SK-N-SH (cell line): ENCODE measurements at regions of chr22 and their contacts with region 1.

Region 1: DNA sequence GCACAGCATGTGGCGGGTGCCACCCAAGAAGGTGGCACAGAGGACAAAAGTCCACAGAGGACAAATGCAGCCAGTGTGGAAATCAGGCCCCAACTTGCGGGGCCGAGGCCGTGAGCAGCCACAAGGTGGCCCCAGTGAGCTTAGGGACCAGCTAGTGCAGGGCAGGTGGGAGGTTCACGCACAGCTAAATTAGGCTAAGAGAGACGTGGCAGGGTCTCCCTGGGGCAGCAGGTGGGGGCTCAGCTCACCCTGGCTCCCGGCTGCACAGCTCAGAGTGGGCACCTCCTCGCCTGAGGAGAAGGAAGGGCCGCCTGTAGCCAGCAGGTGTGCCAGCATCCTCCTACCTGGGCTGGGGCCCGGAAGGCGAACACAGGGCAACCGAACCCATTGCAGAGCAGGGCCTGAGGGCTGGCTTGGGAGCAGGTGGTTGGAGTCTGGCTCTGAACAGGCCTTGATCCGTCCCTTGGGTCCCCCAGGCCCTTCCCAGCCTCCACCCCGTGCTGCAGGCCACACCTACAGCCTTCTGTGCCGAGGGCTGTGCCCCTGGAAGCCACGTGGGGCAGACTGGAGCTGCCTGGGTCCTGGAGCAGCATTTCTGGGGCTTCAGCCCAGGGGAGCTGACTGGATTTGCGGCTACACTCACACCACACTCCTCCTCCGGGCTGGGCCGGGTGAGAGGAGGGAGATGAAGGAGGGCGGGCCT is 26.1 kb upstream of the CELSR1 start:
- DNase-seq: peak; percentile 85
- H3K4me3 ChIP-seq: no peak overlapping the region; a peak in 1 of 4 replicates
- H3K27ac ChIP-seq: 0 out of 4 replicates have a peak overlapping the region, but pooled peaks of 1 of the 2 experiments have one; percentile 8
- H3K4me1 ChIP-seq: peaks cover 0 to 12% of the 10 kb centered on the region in 2 experiments; a peak in 1 of 4 replicates
- H3K27me3 ChIP-seq: no peaks in the 10 kb centered on the region
- CTCF ChIP-seq: peak; percentile 70
- EP300 ChIP-seq: no peak
- RAD21 ChIP-seq: peak; percentile 84

Region 2: DNA sequence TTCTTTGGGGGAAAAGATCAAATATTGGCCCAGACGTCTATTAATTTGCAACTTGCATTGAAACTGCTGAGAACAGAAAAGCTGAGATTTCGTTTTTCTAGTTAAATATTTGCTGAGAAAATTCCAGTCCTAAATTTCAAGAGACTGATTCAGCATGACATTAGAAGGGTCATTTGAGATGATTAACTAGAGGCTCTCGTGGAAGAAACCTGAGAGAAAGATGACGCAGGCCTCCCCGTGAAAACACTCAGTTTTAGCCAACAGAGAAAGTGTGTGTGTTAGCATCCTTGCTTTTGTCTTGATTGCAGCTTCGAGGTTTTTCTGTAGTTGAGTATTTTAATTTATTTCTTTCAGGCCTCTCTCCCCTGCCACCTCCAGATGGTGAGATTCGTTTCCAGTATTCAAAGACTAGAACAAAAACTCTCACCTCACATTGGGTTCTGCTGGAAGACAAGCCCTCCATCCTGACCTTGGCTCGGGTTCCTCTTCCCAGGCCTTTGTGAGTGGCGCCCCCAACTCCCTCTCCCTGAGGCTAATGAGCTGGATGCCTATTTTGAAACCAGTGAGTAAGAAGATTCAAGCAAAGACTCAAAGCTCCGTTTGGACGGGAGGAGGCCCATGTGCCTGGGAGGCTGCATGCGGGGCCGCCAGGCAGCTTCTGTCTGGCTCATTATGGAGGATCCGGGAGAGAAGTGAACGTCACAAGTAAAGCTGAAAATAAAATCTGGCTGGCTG is 78.5 kb before region 1 on chr22:
- CTCF ChIA-PET with region 1: no interaction called
- POLR2A ChIA-PET with region 1: no interaction called
- DNase-seq: no peak
- H3K4me3 ChIP-seq: no peak overlapping the region
- H3K27ac ChIP-seq: no peak overlapping the region
- H3K4me1 ChIP-seq: no peaks in the 10 kb centered on the region
- H3K27me3 ChIP-seq: 0 out of 2 replicates have a peak, but pooled peaks cover 3% of the 10 kb centered on the region
- CTCF ChIP-seq: no peak
- EP300 ChIP-seq: no peak
- RAD21 ChIP-seq: no peak

Region 3: DNA sequence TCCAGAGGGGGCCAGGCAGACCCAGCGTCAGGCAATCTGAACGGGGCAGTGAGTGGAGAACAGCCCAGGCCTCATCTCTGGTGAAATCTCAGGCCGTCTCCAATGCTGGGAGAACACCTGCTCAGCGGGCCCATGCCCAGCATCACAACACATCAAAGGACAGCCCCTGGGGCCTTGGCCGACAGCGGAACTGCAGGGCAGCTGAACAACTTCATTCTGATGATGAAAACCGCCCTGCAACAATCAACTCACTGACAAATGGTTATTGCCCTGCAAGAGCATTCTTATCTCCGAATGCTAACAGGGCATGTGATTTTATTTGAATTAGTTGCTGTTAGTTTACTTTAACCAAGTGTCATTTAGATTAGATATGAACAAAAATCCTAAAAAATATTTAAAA is 40.7 kb before region 1 on chr22:
- CTCF ChIA-PET with region 1: no interaction called
- POLR2A ChIA-PET with region 1: no interaction called
- DNase-seq: no peak
- H3K4me3 ChIP-seq: no peak overlapping the region
- H3K27ac ChIP-seq: no peak overlapping the region
- H3K4me1 ChIP-seq: no peaks in the 10 kb centered on the region; a peak in 1 of 4 replicates
- H3K27me3 ChIP-seq: no peaks in the 10 kb centered on the region
- CTCF ChIP-seq: no peak
- EP300 ChIP-seq: no peak
- RAD21 ChIP-seq: no peak

Region 4: DNA sequence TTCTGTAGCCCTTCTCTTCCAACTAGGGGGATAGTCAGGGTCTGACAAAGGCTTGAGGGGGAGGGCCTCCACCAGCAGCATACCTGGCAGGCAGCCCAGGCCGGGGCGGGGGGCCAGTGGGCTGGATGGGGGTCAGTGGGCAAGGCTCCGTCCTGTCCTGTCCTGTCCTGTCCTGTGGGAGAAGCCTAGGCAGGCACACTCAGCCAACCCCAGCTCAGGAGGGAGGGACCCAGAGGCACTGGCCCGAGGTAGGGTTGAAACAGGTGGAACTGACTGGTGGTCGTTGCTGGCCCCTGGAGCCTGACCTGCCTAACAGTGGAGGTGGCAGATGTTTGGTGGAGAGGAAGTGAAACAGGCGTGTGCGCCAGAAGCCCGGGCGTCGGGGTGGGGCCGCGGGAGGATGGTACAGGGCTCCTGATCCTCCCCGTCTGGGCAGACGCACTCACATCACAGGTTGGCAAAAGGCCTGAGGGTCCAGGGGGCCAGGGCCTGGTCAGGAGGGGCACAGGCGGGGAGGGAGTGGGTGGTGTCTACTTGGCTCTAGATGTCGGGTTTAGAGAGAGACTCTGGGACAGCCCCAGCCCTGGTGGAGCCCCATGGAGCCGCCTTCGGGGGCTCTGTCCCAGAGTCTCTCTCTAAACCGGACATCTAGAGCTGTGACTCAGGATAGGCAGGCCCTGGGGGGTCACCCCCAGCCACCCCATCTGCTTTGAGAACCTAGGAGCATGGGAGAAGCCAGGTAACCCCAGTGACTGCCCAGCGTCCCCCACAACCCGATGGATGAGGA is 24.2 kb after region 1 on chr22:
- CTCF ChIA-PET with region 1: interaction called, 17 read pairs
- POLR2A ChIA-PET with region 1: no interaction called
- DNase-seq: peak; percentile 71
- H3K4me3 ChIP-seq: no peak overlapping the region
- H3K27ac ChIP-seq: no peak overlapping the region; a peak in 1 of 4 replicates
- H3K4me1 ChIP-seq: peaks cover 0 to 40% of the 10 kb centered on the region in 2 experiments; a peak in 1 of 4 replicates
- H3K27me3 ChIP-seq: no peaks in the 10 kb centered on the region
- CTCF ChIP-seq: no peak
- EP300 ChIP-seq: no peak
- RAD21 ChIP-seq: no peak

Region 5: DNA sequence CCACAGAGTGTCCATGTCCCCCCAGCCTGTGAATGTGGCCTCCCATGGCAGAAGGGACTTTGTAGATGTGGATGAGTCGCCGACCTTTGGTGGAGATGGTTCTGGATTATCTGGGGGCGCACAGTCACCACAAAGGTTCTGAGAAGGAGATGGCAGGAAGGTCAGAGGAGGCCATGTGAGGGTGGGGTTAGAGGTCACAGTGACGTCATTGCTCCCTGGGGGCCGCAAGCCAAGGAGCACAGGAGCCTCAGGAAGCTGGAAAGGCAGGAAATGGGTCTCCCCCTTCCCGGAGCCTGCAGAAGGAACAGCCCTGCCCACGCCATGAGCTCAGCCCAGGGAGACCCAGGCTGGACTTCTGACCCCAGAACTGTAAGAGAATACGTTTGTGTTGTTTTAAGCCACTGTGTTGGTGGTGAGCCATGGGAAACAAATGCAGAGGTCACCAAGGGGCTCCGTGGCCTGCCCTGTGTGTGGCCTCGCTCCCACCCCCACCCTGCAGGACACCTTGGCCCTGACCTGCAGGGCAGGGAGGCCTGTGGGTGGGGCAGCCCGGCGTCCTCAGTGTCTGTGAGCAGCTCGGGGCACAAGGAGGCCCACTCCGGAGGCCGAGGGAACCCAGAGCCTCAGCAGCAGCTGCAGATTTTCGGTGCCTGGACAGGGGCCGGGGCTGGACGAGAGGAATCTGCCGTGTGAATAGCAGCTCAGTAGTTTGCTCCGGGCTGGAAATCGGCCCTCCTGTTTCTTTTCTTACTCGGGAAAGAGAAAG is 88.7 kb after region 1 on chr22:
- CTCF ChIA-PET with region 1: interaction called, 20 read pairs
- POLR2A ChIA-PET with region 1: no interaction called
- DNase-seq: no peak
- H3K4me3 ChIP-seq: no peak overlapping the region
- H3K27ac ChIP-seq: no peak overlapping the region
- H3K4me1 ChIP-seq: peaks cover 0 to 27% of the 10 kb centered on the region in 2 experiments; a peak in 1 of 4 replicates
- H3K27me3 ChIP-seq: no peaks in the 10 kb centered on the region
- CTCF ChIP-seq: no peak
- EP300 ChIP-seq: no peak
- RAD21 ChIP-seq: no peak

Region 6: DNA sequence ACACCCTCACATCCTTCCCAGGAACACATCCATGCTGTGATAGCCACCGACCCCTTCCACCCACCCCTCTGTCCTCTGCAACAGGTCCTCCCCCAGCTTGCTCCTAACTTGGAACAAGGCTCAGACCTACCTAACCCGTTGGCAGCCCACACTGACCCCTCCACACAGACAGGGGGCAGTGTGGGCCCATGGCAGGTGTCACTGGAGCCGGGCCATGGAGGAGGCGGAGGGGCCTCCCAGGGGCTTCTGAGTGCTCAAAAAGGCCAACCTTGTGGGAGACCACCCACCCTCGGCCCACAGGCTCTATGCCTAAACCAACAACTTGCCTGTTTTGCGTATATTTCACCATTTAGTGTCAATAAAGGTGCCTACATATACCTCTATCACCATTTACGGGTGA is 117.5 kb after region 1 on chr22:
- CTCF ChIA-PET with region 1: interaction called, 17 read pairs
- POLR2A ChIA-PET with region 1: no interaction called
- DNase-seq: peak; percentile 78
- H3K4me3 ChIP-seq: no peak overlapping the region
- H3K27ac ChIP-seq: no peak overlapping the region
- H3K4me1 ChIP-seq: no peaks in the 10 kb centered on the region; a peak in 1 of 4 replicates
- H3K27me3 ChIP-seq: no peaks in the 10 kb centered on the region
- CTCF ChIP-seq: peak; percentile 53
- EP300 ChIP-seq: no peak
- RAD21 ChIP-seq: peak; percentile 27; the same call in 1 of the 2 replicates

Region 7: DNA sequence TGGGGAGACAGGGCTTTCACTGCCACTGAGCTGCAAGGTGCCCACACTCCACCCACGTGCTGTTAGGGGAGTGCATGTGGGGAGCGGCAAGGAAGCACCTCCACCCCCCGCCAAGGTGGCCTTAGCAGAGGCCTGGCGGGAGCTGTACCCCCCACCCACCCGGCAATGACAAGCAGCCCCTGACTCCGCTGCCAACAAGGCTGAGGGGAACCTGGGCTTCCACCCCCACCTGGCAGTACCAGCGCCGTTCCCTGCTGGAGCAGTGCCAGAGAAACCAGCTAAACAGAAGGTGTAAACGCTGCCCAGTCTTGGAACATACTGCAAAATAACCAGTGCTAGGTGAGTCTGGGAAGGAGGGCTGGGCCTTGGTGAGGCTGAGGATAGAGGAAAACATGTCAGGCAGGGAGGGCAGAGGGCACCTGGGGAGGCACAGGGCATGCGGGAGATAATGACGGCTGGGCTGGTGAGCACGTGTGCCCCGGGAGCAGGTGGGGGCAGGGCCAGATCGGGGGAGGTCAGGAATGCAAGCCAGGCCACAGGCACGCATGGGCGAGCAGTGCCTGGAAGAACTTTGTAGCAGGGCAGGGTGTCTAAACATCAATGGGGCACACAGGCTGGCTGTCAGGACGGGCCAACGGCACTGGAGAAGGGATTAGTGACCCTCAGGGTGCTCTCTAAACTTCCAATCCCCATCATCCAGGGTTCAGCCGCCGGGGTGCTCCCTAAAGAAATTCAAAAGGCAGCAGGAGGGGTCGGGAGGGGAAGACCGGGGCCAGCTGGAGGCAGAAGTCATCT is 167.9 kb after region 1 on chr22:
- CTCF ChIA-PET with region 1: interaction called, 20 read pairs
- POLR2A ChIA-PET with region 1: interaction called, 5 read pairs
- DNase-seq: peak; percentile 50
- H3K4me3 ChIP-seq: no peak overlapping the region
- H3K27ac ChIP-seq: peak overlapping the region in 1 of 2 experiments; percentile 40; a peak in 1 of 4 replicates
- H3K4me1 ChIP-seq: peaks cover 15 to 77% of the 10 kb centered on the region in 2 experiments
- H3K27me3 ChIP-seq: no peaks in the 10 kb centered on the region
- CTCF ChIP-seq: no peak
- EP300 ChIP-seq: 0 out of 4 replicates have a peak, but pooled peaks of 1 of the 2 experiments have one; percentile 26
- RAD21 ChIP-seq: no peak

Region 8: GRCh38 chr22:46798366-46799350 is 235.1 kb after region 1 on chr22:
- CTCF ChIA-PET with region 1: interaction called, 16 read pairs
- POLR2A ChIA-PET with region 1: no interaction called
- DNase-seq: peak; percentile 90
- H3K4me3 ChIP-seq: peak overlapping the region in 1 of 2 experiments; percentile 27; a peak in 1 of 4 replicates
- H3K27ac ChIP-seq: no peak overlapping the region
- H3K4me1 ChIP-seq: peaks cover 0 to 3% of the 10 kb centered on the region in 2 experiments; a peak in 1 of 4 replicates
- H3K27me3 ChIP-seq: no peaks in the 10 kb centered on the region
- CTCF ChIP-seq: peak; percentile 95
- EP300 ChIP-seq: no peak
- RAD21 ChIP-seq: peak; percentile 96